ENCODE measurements at regions of chr20 and their contacts with region 1.

Region 1: DNA sequence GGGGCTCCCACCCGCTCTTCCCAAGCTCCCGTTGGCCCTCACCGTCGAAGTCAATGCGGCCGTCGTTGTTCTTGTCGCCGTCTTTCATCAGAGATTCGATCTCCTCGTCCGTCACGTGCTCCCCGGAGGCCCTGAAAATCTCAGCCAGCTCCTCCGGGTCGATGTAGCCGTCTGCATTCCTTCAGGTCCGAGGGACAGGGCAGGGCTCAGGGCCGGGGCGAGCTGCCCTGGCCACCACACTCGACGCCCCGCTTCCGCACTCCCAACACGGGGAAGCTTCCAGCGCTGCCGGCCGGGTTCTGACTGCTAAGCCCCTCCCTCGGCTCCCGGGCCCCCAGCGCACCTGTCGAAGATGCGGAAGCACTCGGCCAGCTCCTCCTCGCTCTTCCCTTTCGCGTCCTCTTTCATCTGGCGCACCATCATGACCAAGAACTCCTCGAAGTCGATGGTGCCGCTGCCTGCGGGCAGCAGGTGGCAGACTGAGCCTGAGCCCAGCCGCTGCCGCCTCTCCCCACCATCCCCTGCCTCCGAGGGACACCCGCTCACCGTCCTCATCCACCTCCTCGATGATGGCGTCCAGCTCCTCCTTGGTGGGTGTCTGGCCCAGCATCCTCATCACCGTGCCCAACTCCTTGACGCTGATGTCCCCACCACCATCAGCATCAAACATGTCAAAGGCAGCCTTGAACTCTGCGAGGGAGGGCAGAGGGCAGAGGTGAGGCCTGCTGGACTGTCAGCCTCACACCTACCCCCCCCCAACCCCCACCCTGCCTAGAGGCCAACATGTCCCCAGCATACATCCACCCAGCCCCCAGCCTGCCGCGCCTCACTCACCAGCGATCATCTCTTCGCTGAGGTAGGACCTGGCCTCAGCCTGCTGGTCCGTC is 2.9 kb downstream of the TNNC2 start:
- DNase-seq: peak; percentile 82
- H3K4me3 Mint-ChIP-seq: peak overlapping the region; percentile 78
- H3K27ac Mint-ChIP-seq: peak overlapping the region; percentile 64
- H3K4me1 Mint-ChIP-seq: peaks cover 16% of the 10 kb centered on the region
- H3K27me3 Mint-ChIP-seq: peaks cover 32% of the 10 kb centered on the region

Region 2: DNA sequence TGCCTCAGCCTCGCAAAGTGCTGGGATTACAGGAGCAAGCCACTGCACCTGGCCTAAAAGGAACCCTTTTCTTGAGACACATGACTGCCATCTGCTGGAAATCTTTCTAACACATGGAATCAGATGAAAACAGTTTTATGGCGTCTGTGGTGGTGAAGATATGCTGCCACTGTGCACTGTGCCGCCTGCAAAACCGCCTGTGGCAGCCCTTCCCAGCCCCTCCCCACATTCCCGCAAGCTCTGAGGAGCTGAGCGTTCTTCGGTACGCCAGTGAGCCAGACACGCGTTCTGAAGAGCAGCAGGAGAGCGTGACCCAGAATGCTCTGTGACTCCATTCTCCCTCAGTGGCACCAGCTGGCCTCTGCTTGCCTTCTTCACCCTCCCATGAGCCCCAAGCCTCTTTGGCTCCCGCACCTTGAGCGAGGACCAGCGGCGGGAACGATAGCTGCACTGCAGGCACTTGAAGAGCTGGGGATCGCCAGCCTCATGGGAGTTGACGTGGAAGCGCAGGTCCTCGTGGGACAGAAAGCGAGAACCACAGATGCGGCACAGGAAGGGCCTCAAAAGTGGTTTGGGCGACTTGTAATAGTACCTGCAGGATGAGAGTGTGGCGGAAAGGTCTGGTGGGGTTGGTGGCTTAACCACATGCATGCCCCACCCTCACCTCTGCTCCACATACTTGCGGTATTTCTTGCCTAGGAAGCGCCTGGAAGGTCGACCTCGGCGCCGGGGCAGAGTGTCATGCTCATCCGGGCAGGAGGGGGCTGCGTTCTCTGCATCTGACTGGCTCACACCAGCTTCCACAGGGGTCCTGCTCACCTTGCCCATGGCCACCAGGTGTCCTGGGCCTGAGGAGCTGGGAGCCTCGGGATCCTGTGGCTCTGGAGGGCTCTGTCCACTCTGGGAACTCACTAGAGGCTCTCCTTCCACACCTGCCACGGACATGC is 139.1 kb after region 1 on chr20:
- intact Hi-C with region 1: loop called (anchors 1 kb)
- DNase-seq: peak; percentile 74
- H3K4me3 Mint-ChIP-seq: no peak overlapping the region
- H3K27ac Mint-ChIP-seq: no peak overlapping the region
- H3K4me1 Mint-ChIP-seq: peaks cover 3% of the 10 kb centered on the region
- H3K27me3 Mint-ChIP-seq: no peaks in the 10 kb centered on the region

Measured in activated CD4-positive, alpha-beta T cell treated with anti-CD3 and anti-CD28 coated beads, Interleukin-2, amount 10 ng/mL, durations not matched to agents 24 days and 14 days (primary cell).